K562 (cell line): ENCODE measurements at regions of chr3 and their contacts with region 1.

Region 1: DNA sequence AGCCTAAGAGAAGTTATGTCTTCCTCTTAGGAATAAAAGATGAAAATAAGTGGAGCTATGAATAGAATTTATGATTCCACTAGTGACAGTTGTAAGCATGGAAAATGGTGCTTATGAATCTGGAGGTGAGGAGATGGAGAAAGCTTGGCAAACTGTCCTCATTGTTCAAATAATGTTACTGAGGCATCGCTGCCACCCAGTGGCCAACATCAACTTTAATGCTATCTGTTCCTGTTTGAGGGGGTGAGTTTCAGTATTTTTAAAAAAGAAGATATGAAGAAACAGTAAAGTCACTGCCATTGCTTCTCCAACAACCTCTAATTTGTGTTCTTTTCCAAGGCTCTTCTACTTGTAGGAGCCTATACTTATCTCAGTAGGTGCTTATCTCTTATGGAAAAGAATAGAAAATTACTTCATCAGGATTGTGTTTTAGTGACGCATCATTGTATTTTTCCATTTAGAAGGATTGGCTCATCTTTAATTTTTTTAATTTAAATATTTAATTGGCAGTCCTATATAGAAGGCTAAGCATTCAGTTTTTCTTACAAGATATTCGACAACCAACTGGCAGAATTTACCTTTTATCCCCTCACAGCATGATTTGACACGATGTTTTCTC is 260.4 kb upstream of the P2RY1 start:
- DNase-seq: peak; percentile 20 to 68 (median 33)
- ATAC-seq: peak; percentile 88
- H3K4me3 ChIP-seq: no peak overlapping the region
- H3K27ac ChIP-seq: no peak overlapping the region
- H3K4me1 ChIP-seq: no peaks in the 10 kb centered on the region
- H3K27me3 ChIP-seq: no peaks in the 10 kb centered on the region
- CTCF ChIP-seq: peak; percentile 47 to 63 (median 54)
- EP300 ChIP-seq: no peak
- POLR2A ChIP-seq: no peak
- RAD21 ChIP-seq: peak; percentile 52 to 76

Region 2: GRCh38 chr3:152322756-152323155 is 251.8 kb before region 1 on chr3:
- CTCF ChIA-PET with region 1: no interaction called
- POLR2A ChIA-PET with region 1: no interaction called
- in situ Hi-C with region 1: no loop called
- intact Hi-C with region 1: no loop called
- DNase-seq: no peak
- ATAC-seq: no peak
- H3K4me3 ChIP-seq: no peak overlapping the region
- H3K27ac ChIP-seq: peak overlapping the region; percentile 20; the same call in 1 of the 3 replicates
- H3K4me1 ChIP-seq: peaks cover 12 to 47% of the 10 kb centered on the region in 2 experiments
- H3K27me3 ChIP-seq: no peaks in the 10 kb centered on the region
- CTCF ChIP-seq: no peak
- EP300 ChIP-seq: no peak
- POLR2A ChIP-seq: no peak
- RAD21 ChIP-seq: no peak

Region 3: GRCh38 chr3:152508705-152509104 is 65.9 kb before region 1 on chr3:
- CTCF ChIA-PET with region 1: no interaction called
- POLR2A ChIA-PET with region 1: no interaction called
- in situ Hi-C with region 1: no loop called
- intact Hi-C with region 1: loop called (anchors 2 kb)
- DNase-seq: peak; percentile 29 to 44 (median 40)
- ATAC-seq: peak; percentile 67; the same call in 2 of the 3 replicates
- H3K4me3 ChIP-seq: no peak overlapping the region
- H3K27ac ChIP-seq: no peak overlapping the region
- H3K4me1 ChIP-seq: no peaks in the 10 kb centered on the region
- H3K27me3 ChIP-seq: no peaks in the 10 kb centered on the region
- CTCF ChIP-seq: peak; percentile 28 to 66 (median 36); a peak in 4 of 6 replicates
- EP300 ChIP-seq: no peak
- POLR2A ChIP-seq: no peak
- RAD21 ChIP-seq: peak; percentile 75 to 85

Region 4: GRCh38 chr3:152524198-152525140 is 50.1 kb before region 1 on chr3:
- CTCF ChIA-PET with region 1: no interaction called
- POLR2A ChIA-PET with region 1: no interaction called
- in situ Hi-C with region 1: no loop called
- intact Hi-C with region 1: loop called (anchors 2 kb)
- DNase-seq: peak in 2 of 4 experiments; percentile 14 to 76
- ATAC-seq: peak; percentile 53; the same call in 2 of the 3 replicates
- H3K4me3 ChIP-seq: no peak overlapping the region
- H3K27ac ChIP-seq: no peak overlapping the region
- H3K4me1 ChIP-seq: no peaks in the 10 kb centered on the region
- H3K27me3 ChIP-seq: no peaks in the 10 kb centered on the region
- CTCF ChIP-seq: peak; percentile 51 to 70 (median 59); a peak in 5 of 6 replicates
- EP300 ChIP-seq: no peak
- POLR2A ChIP-seq: no peak
- RAD21 ChIP-seq: peak; percentile 76 to 86

Region 5: DNA sequence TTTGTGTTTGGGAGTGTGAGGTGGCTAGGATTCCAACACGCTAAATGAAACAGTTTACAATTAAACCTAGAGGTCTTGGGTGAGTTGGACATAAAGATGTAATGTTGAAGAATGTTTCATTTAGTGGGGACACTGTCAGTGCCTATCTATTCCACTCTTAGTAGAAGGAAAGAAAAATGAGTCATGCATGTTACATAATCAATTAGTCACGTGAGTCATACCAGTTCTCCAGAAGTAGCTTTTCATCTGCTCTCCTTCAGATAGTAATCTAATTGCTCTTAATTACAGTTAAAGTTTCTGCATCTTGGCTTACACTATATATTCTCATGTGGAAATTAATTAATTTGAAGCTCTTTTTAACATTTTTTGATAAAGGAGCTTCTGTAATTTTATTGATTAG is 144.7 kb after region 1 on chr3:
- CTCF ChIA-PET with region 1: no interaction called
- POLR2A ChIA-PET with region 1: no interaction called
- in situ Hi-C with region 1: no loop called
- intact Hi-C with region 1: loop called (anchors 10 kb)
- DNase-seq: peak in 2 of 4 experiments; percentile 13 to 15
- ATAC-seq: no peak
- H3K4me3 ChIP-seq: no peak overlapping the region
- H3K27ac ChIP-seq: no peak overlapping the region
- H3K4me1 ChIP-seq: peaks cover 0 to 3% of the 10 kb centered on the region in 2 experiments; a peak in 1 of 5 replicates
- H3K27me3 ChIP-seq: no peaks in the 10 kb centered on the region
- CTCF ChIP-seq: no peak
- EP300 ChIP-seq: no peak
- POLR2A ChIP-seq: no peak
- RAD21 ChIP-seq: no peak

Region 6: GRCh38 chr3:152834776-152835600 is 260.4 kb after region 1 on chr3 and contains the start of gene P2RY1:
- CTCF ChIA-PET with region 1: no interaction called
- POLR2A ChIA-PET with region 1: no interaction called
- in situ Hi-C with region 1: no loop called
- intact Hi-C with region 1: loop called (anchors 5 kb)
- DNase-seq: peak; percentile 83 to 89 (median 86)
- ATAC-seq: peak; percentile 85
- H3K4me3 ChIP-seq: peak within 1 kb of the TSS; percentile 68
- H3K27ac ChIP-seq: peak within 1 kb of the TSS; percentile 89
- H3K4me1 ChIP-seq: peaks cover 8 to 15% of the 10 kb centered on the region in 2 experiments; a peak in 4 of 5 replicates
- H3K27me3 ChIP-seq: no peaks in the 10 kb centered on the region
- CTCF ChIP-seq: peak; percentile 56 to 79 (median 58)
- EP300 ChIP-seq: no peak
- POLR2A ChIP-seq: peak; percentile 94
- RAD21 ChIP-seq: peak; percentile 39 to 55; a peak in 3 of 4 replicates
- polyA plus RNA-seq, gene P2RY1: 6.0 TPM